ENCODE measurements at regions of chrX and their contacts with region 1.

Region 1: DNA sequence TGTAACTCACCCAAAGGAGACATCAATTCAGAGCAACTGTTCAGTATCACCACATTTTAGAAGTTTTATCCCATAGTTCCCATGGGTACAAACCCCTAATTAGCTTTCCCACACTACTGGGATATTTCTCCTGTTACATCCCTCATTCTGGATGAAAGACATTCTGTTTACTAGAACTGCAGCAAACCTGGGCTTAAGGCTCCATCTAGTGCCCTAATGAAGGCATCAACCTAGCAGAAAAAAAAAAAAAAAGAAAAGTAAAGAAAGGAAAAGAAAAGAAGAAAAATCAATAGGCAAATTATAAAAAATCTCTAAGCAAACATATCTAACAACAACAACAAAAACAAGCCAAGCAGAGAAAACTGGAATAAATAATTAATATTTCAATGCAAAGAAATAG is 133.7 kb upstream of the CPXCR1 start:
- DNase-seq: no peak
- H3K4me3 ChIP-seq: peak overlapping the region in 20 of 59 donors; percentile 1 to 44 (median 16)
- H3K27ac ChIP-seq: peak overlapping the region in 1 of 59 donors; percentile 28
- H3K27me3 ChIP-seq: peaks cover 0 to 39% (median 2%) of the 10 kb centered on the region in 45 donors
- CTCF ChIP-seq: peak in 55 of 56 donors; percentile 25 to 73 (median 49)

Region 2: GRCh38 chrX:87900320-87900908 is 712.9 kb before region 1 on chrX:
- intact Hi-C with region 1: no loop called
- DNase-seq: no peak
- H3K4me3 ChIP-seq: peak overlapping the region in 23 of 59 donors; percentile 4 to 44 (median 20)
- H3K27ac ChIP-seq: no peak overlapping the region
- H3K27me3 ChIP-seq: peaks cover 0 to 60% (median 13%) of the 10 kb centered on the region in 45 donors
- CTCF ChIP-seq: no peak

Region 3: DNA sequence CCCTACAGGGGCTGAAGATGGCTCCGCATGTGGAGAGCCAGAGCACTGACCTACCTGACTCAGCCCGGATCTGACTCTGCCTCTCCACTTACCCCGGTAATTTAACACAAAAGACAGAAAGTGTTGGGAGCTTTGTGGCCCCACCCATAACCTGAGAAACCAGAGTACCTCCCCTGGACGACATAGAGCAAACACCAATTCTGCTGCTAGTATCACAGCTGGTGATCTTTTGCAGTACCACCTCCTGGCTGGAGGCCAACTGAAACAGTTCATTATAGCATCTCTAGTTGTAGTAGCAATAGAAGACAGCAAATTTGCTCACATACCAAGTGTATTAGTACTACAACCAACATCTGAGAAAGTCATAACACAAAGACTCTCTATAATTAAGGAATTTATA is 651.9 kb before region 1 on chrX:
- intact Hi-C with region 1: loop called in 1 of 2 experiments (anchors 10 kb)
- DNase-seq: no peak
- H3K4me3 ChIP-seq: no peak overlapping the region
- H3K27ac ChIP-seq: no peak overlapping the region
- H3K27me3 ChIP-seq: peaks cover 0 to 59% (median 5%) of the 10 kb centered on the region in 45 donors
- CTCF ChIP-seq: no peak

Region 4: DNA sequence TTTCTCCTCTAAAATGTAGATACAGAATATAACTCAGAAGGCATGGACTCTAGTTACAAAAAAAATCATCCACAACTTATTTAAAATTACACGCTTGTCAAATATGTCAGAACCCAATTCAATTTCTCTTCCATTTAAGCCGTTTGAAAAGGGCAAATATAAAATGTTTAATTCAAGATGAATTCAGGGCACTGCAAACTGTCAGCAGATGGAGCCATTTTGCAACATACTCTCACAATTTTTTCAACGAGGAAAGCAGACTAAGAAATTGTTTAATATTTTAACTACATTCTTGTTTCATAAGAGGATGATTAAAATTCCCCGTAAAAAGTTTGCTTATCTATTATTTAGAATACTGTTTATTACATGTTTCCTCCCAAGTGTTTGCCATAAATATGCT is 187.6 kb before region 1 on chrX:
- intact Hi-C with region 1: loop called (anchors 1 to 5 kb)
- DNase-seq: no peak
- H3K4me3 ChIP-seq: no peak overlapping the region
- H3K27ac ChIP-seq: no peak overlapping the region
- H3K27me3 ChIP-seq: peaks cover 0 to 77% (median 8%) of the 10 kb centered on the region in 45 donors
- CTCF ChIP-seq: peak in 54 of 56 donors; percentile 23 to 73 (median 53)

Region 5: GRCh38 chrX:88584283-88584682 is 29.1 kb before region 1 on chrX:
- intact Hi-C with region 1: no loop called
- DNase-seq: no peak
- H3K4me3 ChIP-seq: no peak overlapping the region
- H3K27ac ChIP-seq: no peak overlapping the region
- H3K27me3 ChIP-seq: peaks cover 0 to 43% (median 4%) of the 10 kb centered on the region in 45 donors
- CTCF ChIP-seq: no peak